Panc1 (cell line): ENCODE measurements at regions of chr3 and their contacts with region 1.

Region 1: DNA sequence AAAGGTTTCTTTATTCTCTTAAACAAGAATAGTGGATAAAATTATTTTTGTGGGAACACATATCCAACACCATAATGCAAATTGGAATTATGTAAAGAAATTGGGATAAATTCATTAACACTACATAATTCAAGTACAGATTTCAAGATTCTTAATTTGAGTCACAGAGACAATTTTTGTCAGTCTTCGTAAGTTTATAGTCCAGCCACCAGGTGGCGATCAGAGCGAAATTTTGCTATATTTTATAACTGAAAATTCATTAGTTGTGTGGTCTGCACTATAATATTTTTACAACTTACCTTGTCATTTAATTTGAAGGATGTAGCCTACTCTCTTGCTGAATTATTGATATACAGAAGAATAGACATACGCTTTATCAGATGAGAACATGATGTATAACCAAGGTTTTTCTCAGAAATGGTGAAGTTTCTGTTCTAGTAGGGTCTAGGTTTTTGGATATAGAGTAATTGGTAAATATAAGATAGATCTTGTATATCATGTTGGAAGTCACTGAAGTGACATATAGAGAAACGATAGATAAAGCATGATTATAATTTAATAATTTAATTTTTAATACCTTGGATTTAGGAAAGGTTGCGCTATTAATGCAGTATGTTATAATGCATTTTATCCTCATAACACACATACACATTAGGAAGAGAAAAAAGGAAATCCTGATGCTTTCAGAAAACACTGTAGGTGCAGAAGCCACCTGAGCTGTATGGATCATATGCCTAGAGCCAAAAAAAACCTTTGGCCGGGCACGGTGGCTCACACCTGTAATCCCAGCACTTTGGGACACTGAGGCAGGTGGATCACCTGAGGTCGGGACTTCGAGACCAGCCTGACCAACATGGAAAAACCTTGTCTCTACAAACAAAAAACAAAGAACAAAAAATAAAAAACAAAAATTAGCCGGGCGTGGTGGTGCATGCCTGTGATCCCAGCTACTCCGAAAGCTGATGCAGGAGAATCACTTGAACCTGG is 31.7 kb downstream of the PLSCR4 start:
- DNase-seq: no peak
- ATAC-seq: no peak
- H3K4me3 ChIP-seq: no peak overlapping the region
- H3K27ac ChIP-seq: no peak overlapping the region
- H3K4me1 ChIP-seq: peaks cover 8% of the 10 kb centered on the region; the same call in 1 of the 2 replicates
- H3K27me3 ChIP-seq: no peaks in the 10 kb centered on the region
- CTCF ChIP-seq: peak; percentile 73; the same call in 1 of the 2 replicates

Region 2: GRCh38 chr3:146326670-146327543 is 107.7 kb after region 1 on chr3:
- CTCF ChIA-PET with region 1: interaction called, 5 read pairs
- POLR2A ChIA-PET with region 1: no interaction called
- in situ Hi-C with region 1: no loop called
- intact Hi-C with region 1: loop called (anchors 1 kb)
- DNase-seq: peak; percentile 25
- ATAC-seq: peak; percentile 91
- H3K4me3 ChIP-seq: no peak overlapping the region
- H3K27ac ChIP-seq: no peak overlapping the region
- H3K4me1 ChIP-seq: no peaks in the 10 kb centered on the region
- H3K27me3 ChIP-seq: no peaks in the 10 kb centered on the region
- CTCF ChIP-seq: peak; percentile 71